Naive thymus-derived CD8-positive, alpha-beta T cell (primary cell): ENCODE measurements at regions of chr17 and their contacts with region 1.

Region 1: GRCh38 chr17:50931144-50931908 is 65.2 kb upstream of the TOB1 start:
- DNase-seq: peak; percentile 25 to 77 (median 56)
- ATAC-seq: peak; percentile 82 to 86
- H3K4me3 Mint-ChIP-seq: peak overlapping the region; percentile 80 to 98 (median 88)
- H3K27ac Mint-ChIP-seq: peak overlapping the region; percentile 94 to 99 (median 98)
- H3K4me1 Mint-ChIP-seq: peaks cover 27 to 56% (median 50%) of the 10 kb centered on the region in 4 donors
- H3K27me3 Mint-ChIP-seq: peaks cover 0 to 5% (median 0%) of the 10 kb centered on the region in 5 donors

Region 2: DNA sequence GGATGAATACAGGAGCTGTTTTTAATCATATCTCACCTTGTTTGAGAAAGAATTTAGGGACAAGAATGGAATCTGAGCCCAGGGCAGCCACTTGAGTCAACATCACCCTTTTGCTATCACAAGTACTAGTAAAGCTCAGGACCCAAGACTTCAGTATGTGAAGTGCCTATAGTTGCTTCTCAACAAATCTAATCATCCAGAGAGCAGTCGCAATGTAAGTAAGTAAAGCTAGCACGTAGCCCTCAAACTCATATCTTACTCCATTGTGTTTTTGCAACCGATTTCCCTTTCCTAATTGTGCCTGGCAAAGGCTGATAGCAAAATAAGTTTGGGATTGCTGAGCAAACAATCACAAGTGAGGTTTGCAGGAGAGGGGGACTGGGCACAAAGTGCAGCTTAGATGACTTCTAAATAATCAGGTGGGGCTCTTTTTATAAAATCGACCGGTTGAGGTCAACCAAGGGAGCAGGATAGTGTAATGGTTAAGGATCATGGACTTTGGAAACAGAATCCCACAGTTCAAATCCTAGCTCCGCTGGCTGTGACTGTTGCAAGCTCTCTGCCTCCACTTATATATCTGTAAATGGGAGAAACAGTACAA is 78.2 kb before region 1 on chr17:
- POLR2A ChIA-PET with region 1: interaction called, 11 read pairs
- DNase-seq: no peak
- ATAC-seq: no peak
- H3K4me3 Mint-ChIP-seq: peak overlapping the region in 8 of 10 donors; percentile 70 to 88 (median 84)
- H3K27ac Mint-ChIP-seq: peak overlapping the region in 9 of 10 donors; percentile 87 to 96 (median 93)
- H3K4me1 Mint-ChIP-seq: peaks cover 11 to 28% (median 23%) of the 10 kb centered on the region in 4 donors
- H3K27me3 Mint-ChIP-seq: no peaks in the 10 kb centered on the region

Region 3: DNA sequence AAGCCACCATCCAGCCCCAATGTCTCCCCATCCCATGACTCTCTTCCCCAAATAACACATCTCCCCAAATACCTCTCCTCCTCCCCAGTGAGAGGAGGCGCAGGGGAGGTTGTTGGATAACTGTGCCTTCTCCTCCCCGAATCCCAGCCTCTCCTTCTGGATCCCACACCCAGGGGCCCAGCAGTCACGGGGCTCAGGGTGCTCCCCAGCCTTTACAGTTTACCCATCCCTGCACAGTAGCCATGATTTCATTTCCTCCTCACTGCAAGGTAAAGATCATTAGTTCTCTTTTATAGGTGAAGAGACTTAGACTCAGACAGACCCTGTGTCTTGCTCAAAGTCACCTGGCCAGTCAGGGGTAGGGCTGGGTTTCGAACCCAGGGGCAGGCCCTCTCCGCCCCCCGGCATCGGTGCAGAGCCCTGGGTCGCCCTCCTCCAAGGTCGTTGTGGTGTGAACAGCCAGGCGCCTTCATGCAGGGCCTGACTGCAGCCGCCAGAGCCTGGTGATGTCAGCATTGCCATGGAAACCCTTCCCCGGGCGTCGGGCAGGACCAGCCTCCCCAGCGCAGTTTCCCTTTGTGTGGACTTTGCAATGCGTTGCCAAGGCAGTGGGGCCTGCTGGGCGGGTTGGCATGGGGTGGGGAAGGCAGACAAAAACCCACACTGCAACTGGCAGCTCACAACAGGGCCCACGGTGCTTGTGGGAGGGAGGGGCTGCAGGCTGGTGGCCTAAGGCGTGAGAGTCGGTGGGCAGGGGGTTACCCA is 11.8 kb before region 1 on chr17:
- POLR2A ChIA-PET with region 1: interaction called, 59 read pairs
- DNase-seq: peak; percentile 62 to 98 (median 90)
- ATAC-seq: peak; percentile 89 to 90
- H3K4me3 Mint-ChIP-seq: peak overlapping the region; percentile 66 to 92 (median 82)
- H3K27ac Mint-ChIP-seq: peak overlapping the region; percentile 97 to 100 (median 99)
- H3K4me1 Mint-ChIP-seq: peaks cover 31 to 71% (median 60%) of the 10 kb centered on the region in 4 donors
- H3K27me3 Mint-ChIP-seq: no peaks in the 10 kb centered on the region

Region 4: GRCh38 chr17:50944054-50944901 is 13.0 kb after region 1 on chr17:
- POLR2A ChIA-PET with region 1: interaction called, 103 read pairs
- DNase-seq: peak; percentile 54 to 89 (median 74)
- ATAC-seq: peak; percentile 87
- H3K4me3 Mint-ChIP-seq: peak overlapping the region; percentile 77 to 89 (median 84)
- H3K27ac Mint-ChIP-seq: peak overlapping the region; percentile 91 to 96 (median 94)
- H3K4me1 Mint-ChIP-seq: peaks cover 31 to 62% (median 52%) of the 10 kb centered on the region in 4 donors
- H3K27me3 Mint-ChIP-seq: no peaks in the 10 kb centered on the region

Region 5: DNA sequence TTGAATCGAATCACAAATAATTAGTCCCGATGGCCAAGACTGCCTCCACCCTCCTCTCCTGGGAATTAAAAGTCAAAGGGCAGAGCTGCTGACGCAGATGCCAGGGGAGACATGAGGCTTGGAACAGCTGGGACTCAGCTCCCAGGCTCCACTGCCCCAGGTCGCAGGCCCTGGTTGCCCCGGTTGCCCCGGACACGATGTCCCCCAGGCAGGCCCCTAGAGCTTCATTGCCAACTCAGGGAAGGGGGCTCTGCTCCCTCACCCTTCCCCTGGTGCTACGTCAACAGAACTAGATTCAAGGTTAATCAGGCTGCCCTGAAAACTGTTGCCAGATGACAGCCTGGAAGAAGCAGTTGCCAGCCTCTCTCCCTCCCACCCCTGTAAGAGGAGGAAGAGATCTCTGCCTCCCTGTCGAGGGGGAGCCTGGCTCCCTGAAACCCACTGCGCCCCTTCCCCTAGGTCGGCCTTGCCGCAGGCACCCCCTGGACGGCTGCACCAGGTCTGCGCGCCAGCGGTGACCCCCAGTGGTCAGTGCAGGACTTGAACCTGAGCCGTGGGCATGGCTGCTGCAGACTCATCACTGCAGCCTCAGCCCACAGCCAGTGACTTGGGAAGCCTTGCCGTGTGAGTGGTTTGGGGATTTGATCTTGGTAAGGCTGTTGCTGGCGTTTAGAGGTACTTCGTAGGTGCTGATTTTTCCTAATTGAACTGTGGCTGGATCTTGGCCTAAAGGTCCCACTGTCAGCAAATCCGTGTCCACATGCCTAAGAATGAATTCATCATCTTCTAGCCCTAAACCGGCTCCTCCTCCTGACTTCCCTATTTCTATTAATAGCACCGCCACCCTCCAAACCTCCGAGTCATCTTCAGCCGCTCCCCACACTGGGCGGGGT is 18.9 kb after region 1 on chr17:
- POLR2A ChIA-PET with region 1: interaction called, 103 read pairs
- DNase-seq: peak; percentile 34 to 84 (median 50)
- ATAC-seq: peak; percentile 92 to 95
- H3K4me3 Mint-ChIP-seq: peak overlapping the region in 3 of 10 donors; percentile 33 to 54 (median 45)
- H3K27ac Mint-ChIP-seq: peak overlapping the region in 9 of 10 donors; percentile 49 to 90 (median 70)
- H3K4me1 Mint-ChIP-seq: peaks cover 15 to 41% (median 36%) of the 10 kb centered on the region in 4 donors
- H3K27me3 Mint-ChIP-seq: no peaks in the 10 kb centered on the region

Region 6: DNA sequence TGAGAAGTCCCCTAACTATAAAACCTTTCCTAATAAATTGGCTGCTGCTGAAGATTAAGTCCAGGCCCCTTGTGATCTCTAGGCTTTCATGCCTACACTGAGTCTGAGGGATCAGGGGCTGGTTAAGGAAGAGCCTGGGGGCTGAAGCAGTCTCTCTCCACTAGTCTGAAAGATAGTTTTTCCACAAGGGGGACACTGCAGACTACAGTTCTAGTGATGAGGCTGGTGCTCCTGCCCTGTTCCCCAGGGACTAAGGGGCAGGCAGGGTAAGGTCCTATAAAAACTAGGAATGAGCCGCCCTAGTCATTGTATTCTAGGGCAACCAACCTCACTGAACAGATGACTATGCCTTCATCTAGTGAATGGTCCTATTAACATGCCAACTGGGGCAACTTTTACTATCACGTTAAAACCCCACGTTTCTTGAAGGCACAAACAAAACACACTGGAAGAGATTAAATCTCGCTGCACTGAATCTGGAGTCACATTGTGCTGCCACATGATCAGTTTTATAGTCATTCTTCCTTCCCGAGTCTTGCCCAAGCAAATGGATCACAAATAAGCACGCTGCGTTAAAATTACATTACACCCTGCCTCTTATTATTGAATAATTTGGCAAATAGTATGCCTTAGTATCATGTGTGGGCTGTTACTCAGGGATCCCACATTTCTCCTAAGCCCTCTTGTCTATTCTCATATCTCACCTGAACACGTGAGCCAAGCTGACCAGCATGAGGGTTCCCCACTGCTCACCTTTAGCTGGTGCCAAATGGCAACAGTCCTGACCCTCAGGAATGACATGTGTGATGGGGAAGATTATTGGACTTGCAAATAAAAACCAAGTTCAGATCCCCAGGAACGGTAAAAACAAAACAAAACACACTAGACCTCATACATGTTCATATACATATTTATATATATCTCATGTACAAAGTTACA is 30.2 kb after region 1 on chr17:
- POLR2A ChIA-PET with region 1: no interaction called
- DNase-seq: no peak
- ATAC-seq: no peak
- H3K4me3 Mint-ChIP-seq: no peak overlapping the region
- H3K27ac Mint-ChIP-seq: peak overlapping the region in 2 of 10 donors; percentile 29 to 54
- H3K4me1 Mint-ChIP-seq: peaks cover 3 to 10% (median 4%) of the 10 kb centered on the region in 4 donors
- H3K27me3 Mint-ChIP-seq: no peaks in the 10 kb centered on the region

Region 7: DNA sequence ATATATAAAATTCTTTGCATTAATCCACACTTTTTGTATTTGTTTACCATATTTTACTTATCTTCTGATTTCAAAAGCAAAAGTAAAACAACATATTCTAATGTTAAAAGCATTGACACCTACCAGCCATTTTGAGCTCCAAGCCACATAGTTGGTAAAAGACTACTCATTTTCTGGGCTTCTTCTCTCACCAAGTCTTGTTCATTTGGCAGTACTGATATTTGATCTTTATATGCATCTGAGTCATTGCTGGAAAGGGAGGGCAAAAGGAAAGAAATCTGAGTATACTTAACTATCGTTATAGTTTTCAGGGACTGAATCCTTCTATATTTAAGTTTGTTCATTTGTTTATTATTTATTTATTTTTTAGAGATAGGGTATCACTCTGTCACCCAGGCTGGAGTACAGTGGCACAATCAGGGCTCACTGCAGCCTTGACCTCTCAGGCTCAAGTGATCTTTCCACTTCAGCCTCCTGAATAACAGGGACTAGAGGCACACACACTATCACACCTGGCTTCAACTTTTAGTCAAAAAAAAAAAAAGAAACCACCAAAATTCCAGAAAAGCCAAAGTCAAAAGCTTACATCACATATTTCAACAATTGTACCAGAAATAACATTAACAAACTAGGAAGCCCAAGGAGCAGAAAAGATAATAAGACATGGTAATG is 55.8 kb after region 1 on chr17:
- POLR2A ChIA-PET with region 1: no interaction called
- DNase-seq: no peak
- ATAC-seq: no peak
- H3K4me3 Mint-ChIP-seq: no peak overlapping the region
- H3K27ac Mint-ChIP-seq: peak overlapping the region in 2 of 10 donors; percentile 4 to 21
- H3K4me1 Mint-ChIP-seq: peaks cover 0 to 1% (median 0%) of the 10 kb centered on the region in 4 donors
- H3K27me3 Mint-ChIP-seq: no peaks in the 10 kb centered on the region